A549 (cell line): ENCODE measurements at regions of chr16 and their contacts with region 1.

Region 1: DNA sequence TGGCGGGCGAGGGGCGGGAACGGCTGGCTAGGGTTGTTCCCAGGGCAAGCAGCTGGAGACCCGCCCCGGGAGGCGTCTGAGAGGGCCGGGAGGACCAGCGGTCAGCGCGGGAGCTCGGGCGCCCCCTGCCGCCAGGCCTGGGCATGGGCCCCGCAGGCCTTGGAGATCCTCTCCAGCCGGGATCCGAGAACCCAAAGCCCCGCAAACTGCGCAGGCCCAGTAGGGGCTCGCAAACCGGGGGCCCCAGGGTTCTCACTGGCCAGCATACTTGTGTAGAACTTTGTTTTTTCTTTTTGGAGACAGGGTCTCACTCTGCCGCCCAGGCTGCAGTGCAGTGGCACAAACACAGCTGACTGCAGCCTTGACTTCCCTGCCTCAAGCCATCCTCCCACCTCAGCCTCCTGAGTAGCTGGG is 20.8 kb upstream of the ZNF423 start:
- DNase-seq: peak; percentile 40 to 90
- ATAC-seq: peak; percentile 84 to 97
- H3K4me3 ChIP-seq: peak overlapping the region; percentile 30
- H3K27ac ChIP-seq: peak overlapping the region in 1 of 2 experiments; percentile 65; a peak in 3 of 6 replicates
- H3K4me1 ChIP-seq: no peaks in the 10 kb centered on the region
- CTCF ChIP-seq: peak; percentile 73
- EP300 ChIP-seq: no peak
- POLR2A ChIP-seq: no peak
- RAD21 ChIP-seq: peak; percentile 27 to 42; a peak in 3 of 5 replicates

Region 2: GRCh38 chr16:49849046-49849753 is 27.5 kb before region 1 on chr16:
- CTCF ChIA-PET with region 1: no interaction called
- POLR2A ChIA-PET with region 1: no interaction called
- DNase-seq: no peak
- ATAC-seq: no peak
- H3K4me3 ChIP-seq: no peak overlapping the region
- H3K27ac ChIP-seq: no peak overlapping the region
- H3K4me1 ChIP-seq: no peaks in the 10 kb centered on the region
- CTCF ChIP-seq: no peak
- EP300 ChIP-seq: no peak
- POLR2A ChIP-seq: no peak
- RAD21 ChIP-seq: no peak

Region 3: DNA sequence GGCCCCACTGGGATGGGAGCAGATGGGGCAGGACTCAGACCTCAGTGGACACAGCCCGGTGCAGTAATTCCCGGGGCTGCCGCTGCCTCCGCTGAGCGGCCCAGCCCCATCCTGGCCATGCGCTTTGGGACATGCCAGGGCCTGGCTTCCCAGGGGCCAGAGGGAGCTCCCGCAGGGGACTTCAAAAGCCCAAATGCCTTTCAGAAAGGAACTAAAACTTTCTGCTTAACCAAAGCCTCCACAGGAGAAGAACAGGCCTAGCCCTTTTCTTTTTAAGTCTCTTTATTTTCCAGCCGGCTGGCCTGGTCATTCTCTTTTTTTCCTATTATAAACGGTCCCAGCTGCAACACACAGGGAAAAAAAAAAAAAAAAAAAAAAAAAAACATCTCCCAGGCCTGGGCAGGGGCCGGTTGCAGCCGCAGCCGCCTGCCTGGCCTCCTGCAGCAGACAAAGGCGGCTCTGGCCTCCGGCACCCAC is 10.1 kb before region 1 on chr16:
- CTCF ChIA-PET with region 1: interaction called, 14 read pairs
- POLR2A ChIA-PET with region 1: no interaction called
- DNase-seq: no peak
- ATAC-seq: no peak
- H3K4me3 ChIP-seq: no peak overlapping the region
- H3K27ac ChIP-seq: no peak overlapping the region
- H3K4me1 ChIP-seq: no peaks in the 10 kb centered on the region
- CTCF ChIP-seq: no peak
- EP300 ChIP-seq: no peak
- POLR2A ChIP-seq: no peak
- RAD21 ChIP-seq: no peak

Region 4: DNA sequence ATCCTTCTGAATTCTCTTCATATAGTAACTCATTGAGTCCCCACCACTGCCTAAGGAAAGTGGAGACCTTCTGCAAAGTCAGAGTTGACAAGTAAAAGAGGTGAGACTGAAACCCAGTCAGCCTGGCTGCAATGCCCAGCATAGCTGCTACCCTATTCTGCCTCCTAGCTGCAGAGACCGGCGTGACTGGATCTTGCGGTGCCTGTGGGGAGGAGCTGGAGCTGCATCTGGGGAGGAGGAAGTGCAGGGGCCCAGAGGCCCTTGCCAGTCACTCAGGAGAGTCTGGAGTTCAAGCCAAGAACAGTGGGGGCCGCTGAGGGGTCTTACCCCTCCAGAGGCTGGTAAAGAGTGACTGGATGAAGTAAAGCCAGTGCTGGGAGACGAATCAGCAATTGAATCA is 14.2 kb after region 1 on chr16:
- CTCF ChIA-PET with region 1: interaction called, 36 read pairs
- POLR2A ChIA-PET with region 1: no interaction called
- DNase-seq: peak in 1 of 2 experiments; percentile 15
- ATAC-seq: peak in 1 of 2 experiments; percentile 50; a peak in 2 of 6 replicates
- H3K4me3 ChIP-seq: no peak overlapping the region
- H3K27ac ChIP-seq: no peak overlapping the region
- H3K4me1 ChIP-seq: no peaks in the 10 kb centered on the region
- CTCF ChIP-seq: no peak
- EP300 ChIP-seq: no peak
- POLR2A ChIP-seq: no peak
- RAD21 ChIP-seq: no peak

Region 5: GRCh38 chr16:49904348-49905062 is 27.8 kb after region 1 on chr16:
- CTCF ChIA-PET with region 1: interaction called, 11 read pairs
- POLR2A ChIA-PET with region 1: no interaction called
- DNase-seq: no peak
- ATAC-seq: no peak
- H3K4me3 ChIP-seq: no peak overlapping the region
- H3K27ac ChIP-seq: no peak overlapping the region
- H3K4me1 ChIP-seq: no peaks in the 10 kb centered on the region
- CTCF ChIP-seq: no peak
- EP300 ChIP-seq: no peak
- POLR2A ChIP-seq: no peak
- RAD21 ChIP-seq: no peak